ENCODE measurements at regions of chr7 and their contacts with region 1.

Region 1: DNA sequence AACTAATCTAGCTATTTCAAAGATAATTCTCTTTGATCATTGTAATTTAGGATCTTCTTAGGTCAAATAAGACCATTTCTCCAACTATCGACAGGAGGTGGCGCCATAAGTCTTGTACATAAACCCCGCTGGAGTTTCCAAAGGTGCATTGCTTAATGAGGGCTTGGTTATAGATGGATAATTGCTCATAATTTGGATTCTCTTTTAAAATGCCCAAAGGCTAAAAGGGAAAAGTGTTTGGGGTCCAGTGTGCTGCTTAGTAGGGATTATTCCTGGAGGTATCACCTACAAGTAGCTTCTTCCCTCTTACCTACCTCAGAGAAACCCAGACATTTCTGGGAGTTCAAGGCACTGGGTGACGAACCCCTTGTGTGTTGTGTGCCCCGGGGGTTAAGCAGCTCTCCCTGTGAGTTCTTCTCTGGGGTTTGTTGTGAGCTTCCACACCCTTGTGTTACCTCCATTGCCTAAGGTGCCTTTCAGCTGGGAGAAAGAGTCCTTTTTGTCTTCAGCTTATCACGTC is 75.2 kb downstream of the PAXIP1 start:
- DNase-seq: peak; percentile 68 to 79
- H3K4me3 ChIP-seq: peak overlapping the region; percentile 63
- H3K27ac ChIP-seq: peak overlapping the region; percentile 20; the same call in 1 of the 2 replicates
- H3K4me1 ChIP-seq: peaks cover 7% of the 10 kb centered on the region; the same call in 1 of the 2 replicates
- H3K27me3 ChIP-seq: peaks cover 31% of the 10 kb centered on the region
- CTCF ChIP-seq: peak; percentile 96

Region 2: GRCh38 chr7:153473185-153473584 is 1454.5 kb before region 1 on chr7:
- CTCF ChIA-PET with region 1: no interaction called
- POLR2A ChIA-PET with region 1: no interaction called
- intact Hi-C with region 1: no loop called
- DNase-seq: no peak
- H3K4me3 ChIP-seq: no peak overlapping the region
- H3K27ac ChIP-seq: no peak overlapping the region
- H3K4me1 ChIP-seq: no peaks in the 10 kb centered on the region
- H3K27me3 ChIP-seq: peaks cover 26% of the 10 kb centered on the region
- CTCF ChIP-seq: no peak

Region 3: DNA sequence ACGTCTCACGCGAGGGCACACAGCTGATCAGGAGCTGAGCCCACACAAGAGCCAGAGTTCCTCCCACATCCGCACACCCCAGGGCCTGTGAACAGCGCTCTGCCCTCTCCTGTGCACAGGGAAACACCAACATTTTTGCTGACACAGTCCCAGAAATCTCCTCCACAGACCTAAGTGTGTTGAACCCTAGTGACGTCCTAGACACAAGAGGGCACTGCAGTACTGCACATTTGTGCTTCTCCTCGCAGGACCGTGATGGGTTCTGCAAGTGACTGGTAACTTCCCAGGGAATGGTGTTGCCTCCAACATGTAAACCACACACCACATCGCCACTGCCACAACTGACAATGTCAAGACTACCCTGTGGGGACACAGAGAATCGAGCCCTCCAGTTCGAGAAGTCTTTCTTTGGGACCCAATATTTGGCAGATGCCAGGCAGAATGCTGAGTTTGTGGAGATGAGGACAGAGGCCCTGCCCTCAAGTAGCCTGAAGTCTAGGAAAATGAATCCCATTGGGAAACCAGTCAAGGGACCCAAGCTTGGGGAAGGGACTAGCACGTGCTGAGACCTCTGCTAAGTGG is 95.0 kb before region 1 on chr7:
- CTCF ChIA-PET with region 1: no interaction called
- POLR2A ChIA-PET with region 1: no interaction called
- intact Hi-C with region 1: no loop called
- DNase-seq: no peak
- H3K4me3 ChIP-seq: no peak overlapping the region
- H3K27ac ChIP-seq: no peak overlapping the region
- H3K4me1 ChIP-seq: no peaks in the 10 kb centered on the region
- H3K27me3 ChIP-seq: peaks cover 95% of the 10 kb centered on the region
- CTCF ChIP-seq: peak; percentile 20; the same call in 1 of the 2 replicates

Region 4: GRCh38 chr7:155069992-155070751 is 142.5 kb after region 1 on chr7 and contains the start of gene HTR5A:
- CTCF ChIA-PET with region 1: no interaction called
- POLR2A ChIA-PET with region 1: no interaction called
- intact Hi-C with region 1: loop called (anchors 5 kb)
- DNase-seq: peak; percentile 55 to 77
- H3K4me3 ChIP-seq: no peak within 1 kb of the TSS
- H3K27ac ChIP-seq: no peak within 1 kb of the TSS
- H3K4me1 ChIP-seq: no peaks in the 10 kb centered on the region
- H3K27me3 ChIP-seq: peaks cover 72% of the 10 kb centered on the region
- CTCF ChIP-seq: no peak
- total RNA-seq, gene HTR5A: not detected in 2 replicates

Region 5: GRCh38 chr7:155190688-155191087 is 263.0 kb after region 1 on chr7:
- CTCF ChIA-PET with region 1: no interaction called
- POLR2A ChIA-PET with region 1: no interaction called
- intact Hi-C with region 1: loop called (anchors 5 kb)
- DNase-seq: peak in 1 of 2 experiments; percentile 72
- H3K4me3 ChIP-seq: no peak overlapping the region
- H3K27ac ChIP-seq: no peak overlapping the region
- H3K4me1 ChIP-seq: 0 out of 2 replicates have a peak, but pooled peaks cover 5% of the 10 kb centered on the region
- H3K27me3 ChIP-seq: peaks cover 49% of the 10 kb centered on the region
- CTCF ChIP-seq: peak; percentile 98

Region 6: DNA sequence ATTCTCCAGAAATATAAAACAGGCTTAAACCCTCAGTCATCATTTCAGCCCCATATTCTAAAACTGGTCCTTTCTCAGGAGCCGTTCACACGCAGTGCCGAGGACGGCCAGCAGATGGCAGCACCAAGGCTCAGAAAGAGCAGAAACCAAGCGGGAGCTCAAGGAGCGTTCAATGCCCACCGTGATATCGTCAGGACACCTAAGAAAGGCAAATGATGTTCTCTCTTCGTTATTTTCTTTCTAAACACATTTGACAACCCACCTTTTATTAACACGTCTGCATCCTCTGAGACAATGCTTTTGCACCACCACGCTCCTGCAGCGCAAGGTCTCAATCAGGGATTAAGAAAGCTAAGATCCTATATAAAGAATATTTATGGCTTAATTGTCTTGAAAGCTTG is 671.1 kb after region 1 on chr7:
- CTCF ChIA-PET with region 1: interaction called, 4 read pairs
- POLR2A ChIA-PET with region 1: no interaction called
- intact Hi-C with region 1: loop called (anchors 2 kb)
- DNase-seq: peak; percentile 52 to 70
- H3K4me3 ChIP-seq: no peak overlapping the region
- H3K27ac ChIP-seq: no peak overlapping the region
- H3K4me1 ChIP-seq: no peaks in the 10 kb centered on the region
- H3K27me3 ChIP-seq: peaks cover 87% of the 10 kb centered on the region
- CTCF ChIP-seq: peak; percentile 100

Region 7: GRCh38 chr7:155644178-155644970 is 716.7 kb after region 1 on chr7 and contains the start of gene RBM33:
- CTCF ChIA-PET with region 1: no interaction called
- POLR2A ChIA-PET with region 1: no interaction called
- intact Hi-C with region 1: loop called (anchors 2 kb)
- DNase-seq: peak; percentile 75 to 85
- H3K4me3 ChIP-seq: peak within 1 kb of the TSS; percentile 83
- H3K27ac ChIP-seq: peak within 1 kb of the TSS; percentile 77
- H3K4me1 ChIP-seq: peaks cover 20% of the 10 kb centered on the region
- H3K27me3 ChIP-seq: no peaks in the 10 kb centered on the region
- CTCF ChIP-seq: no peak
- total RNA-seq, gene RBM33: 85.7 and 113 TPM in 2 replicates

Region 8: DNA sequence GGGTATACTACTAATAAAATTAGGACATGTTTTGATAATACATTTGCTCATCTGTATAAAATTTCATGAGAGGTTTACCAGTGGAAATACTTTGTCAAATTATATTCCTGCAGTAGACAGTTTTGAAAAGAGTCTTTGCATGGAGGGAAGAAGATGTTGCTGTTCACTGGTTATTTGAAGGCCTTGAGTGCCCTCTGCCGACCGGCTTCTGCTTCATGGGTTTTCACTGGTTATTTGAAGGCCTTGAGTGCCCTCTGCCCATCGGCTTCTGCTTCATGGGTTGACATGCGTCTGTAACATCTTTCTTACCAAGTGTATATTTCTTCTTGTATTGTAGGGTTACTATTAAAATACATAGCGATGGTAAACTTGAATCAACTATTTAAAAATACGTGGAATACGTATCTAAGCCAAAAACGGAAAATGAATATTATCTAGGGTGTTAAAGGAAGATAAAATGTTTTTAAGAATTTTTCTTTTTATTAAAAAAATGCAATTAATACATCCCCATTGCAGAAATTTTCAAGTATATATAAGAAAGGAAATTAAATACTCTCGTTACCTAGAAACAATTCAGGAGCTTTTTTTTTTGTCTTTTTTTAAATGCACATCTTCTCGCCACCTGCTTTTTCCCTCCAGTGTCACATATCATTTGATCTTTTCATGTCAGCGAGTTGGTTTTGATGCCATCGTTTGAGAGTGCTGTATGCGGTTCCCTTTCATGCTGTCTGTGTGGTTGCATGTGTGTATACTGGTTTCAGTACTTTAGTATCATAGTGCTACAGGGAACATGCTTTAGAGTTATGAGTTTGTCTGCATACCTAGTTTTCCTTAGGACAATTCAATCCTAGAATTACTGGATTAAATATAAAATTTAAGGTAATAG is 811.2 kb after region 1 on chr7:
- CTCF ChIA-PET with region 1: no interaction called
- POLR2A ChIA-PET with region 1: no interaction called
- intact Hi-C with region 1: loop called (anchors 2 kb)
- DNase-seq: peak; percentile 51 to 60
- H3K4me3 ChIP-seq: no peak overlapping the region
- H3K27ac ChIP-seq: no peak overlapping the region
- H3K4me1 ChIP-seq: no peaks in the 10 kb centered on the region
- H3K27me3 ChIP-seq: no peaks in the 10 kb centered on the region
- CTCF ChIP-seq: peak; percentile 84

Region 9: GRCh38 chr7:155763691-155764437 is 836.2 kb after region 1 on chr7:
- CTCF ChIA-PET with region 1: interaction called, 4 read pairs
- POLR2A ChIA-PET with region 1: no interaction called
- intact Hi-C with region 1: loop called (anchors 1 kb)
- DNase-seq: no peak
- H3K4me3 ChIP-seq: no peak overlapping the region
- H3K27ac ChIP-seq: no peak overlapping the region
- H3K4me1 ChIP-seq: no peaks in the 10 kb centered on the region
- H3K27me3 ChIP-seq: no peaks in the 10 kb centered on the region
- CTCF ChIP-seq: no peak

Measured in PC-9 (cell line).